Dendritic cell treated with granulocyte-macrophage colony-stimulating factor and Interleukin-4, amounts not matched to agents 40 ng/mL and 50 ng/mL, for 4 days (primary cell): ENCODE measurements at regions of chr14 and their contacts with region 1.

Region 1: GRCh38 chr14:70027785-70028428 is 148.7 kb downstream of the SMOC1 start:
- H3K4me3 Mint-ChIP-seq: no peak overlapping the region
- H3K27ac Mint-ChIP-seq: no peak overlapping the region
- H3K4me1 Mint-ChIP-seq: no peaks in the 10 kb centered on the region
- H3K27me3 Mint-ChIP-seq: peaks cover 1% of the 10 kb centered on the region

Region 2: DNA sequence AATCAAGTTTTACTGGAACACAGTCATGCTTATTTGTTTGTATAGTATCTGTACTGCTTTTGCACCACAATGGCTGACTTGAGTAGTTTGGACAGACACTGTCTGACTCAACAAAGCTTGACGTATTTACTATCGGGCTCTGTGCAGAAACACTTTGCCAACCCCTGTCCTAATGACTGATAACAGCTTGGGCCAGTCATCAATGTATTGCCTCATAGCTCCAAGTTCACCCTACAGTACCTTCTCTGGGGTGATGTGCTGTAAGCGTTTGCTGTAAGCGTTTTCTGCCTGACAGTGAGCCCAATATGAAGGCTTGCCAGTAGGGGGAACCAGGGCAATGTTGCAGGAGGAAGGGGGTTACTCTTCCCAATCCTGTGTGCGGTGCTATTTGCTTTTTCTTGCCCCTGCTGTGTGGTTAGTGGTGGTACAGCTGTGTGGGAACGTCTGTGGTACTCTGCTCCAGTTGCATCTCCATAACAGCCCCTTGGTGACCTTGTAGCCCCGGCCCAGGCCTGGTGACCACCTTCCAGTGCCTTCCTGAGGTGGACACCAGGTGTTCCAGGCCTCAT is 447.8 kb before region 1 on chr14:
- intact Hi-C with region 1: loop called (anchors 10 kb)
- H3K4me3 Mint-ChIP-seq: no peak overlapping the region
- H3K27ac Mint-ChIP-seq: no peak overlapping the region
- H3K4me1 Mint-ChIP-seq: peaks cover 12% of the 10 kb centered on the region
- H3K27me3 Mint-ChIP-seq: peaks cover 41% of the 10 kb centered on the region

Region 3: DNA sequence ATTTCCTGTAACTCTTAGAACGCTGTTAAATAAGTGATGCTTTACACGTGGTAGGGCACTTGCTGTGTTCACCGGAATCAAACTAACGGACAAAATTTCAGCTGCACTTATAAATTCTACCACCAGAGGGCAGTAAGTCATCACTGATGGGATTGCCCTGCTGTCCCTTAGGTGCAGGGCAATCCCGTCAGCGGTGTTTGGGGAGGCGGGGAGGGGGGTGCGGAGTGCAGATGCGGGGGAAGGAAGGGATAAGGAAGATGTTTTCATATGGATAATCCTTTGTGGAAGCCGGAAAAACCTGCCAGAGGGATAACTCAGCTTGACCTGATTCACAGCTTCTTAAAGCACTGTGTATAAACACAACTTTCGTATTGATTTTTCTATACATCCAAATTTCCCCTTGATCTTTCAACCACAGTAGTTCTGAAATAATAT is 209.1 kb before region 1 on chr14:
- intact Hi-C with region 1: loop called (anchors 1 kb)
- H3K4me3 Mint-ChIP-seq: no peak overlapping the region
- H3K27ac Mint-ChIP-seq: no peak overlapping the region
- H3K4me1 Mint-ChIP-seq: peaks cover 5% of the 10 kb centered on the region
- H3K27me3 Mint-ChIP-seq: peaks cover 2% of the 10 kb centered on the region

Region 4: DNA sequence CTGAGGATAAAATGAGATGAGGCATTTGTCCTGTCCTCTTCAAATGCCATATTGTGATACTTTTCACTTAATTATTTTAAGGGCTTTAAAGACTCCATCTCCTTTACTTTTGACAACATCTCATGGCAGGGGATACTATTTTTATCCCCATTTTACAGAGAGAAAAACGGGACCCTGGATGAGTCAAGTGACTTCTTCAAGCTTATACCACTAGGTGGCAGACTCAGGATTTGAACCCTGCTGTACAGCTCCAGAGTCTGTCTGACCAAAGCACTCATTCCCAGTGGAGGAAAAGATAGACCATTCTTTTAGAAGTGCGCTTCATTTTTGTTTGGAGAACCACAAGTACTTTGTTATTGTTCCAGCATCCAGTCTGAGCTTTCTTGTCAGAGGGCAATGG is 150.4 kb before region 1 on chr14:
- intact Hi-C with region 1: loop called (anchors 1 kb)
- H3K4me3 Mint-ChIP-seq: no peak overlapping the region
- H3K27ac Mint-ChIP-seq: no peak overlapping the region
- H3K4me1 Mint-ChIP-seq: no peaks in the 10 kb centered on the region
- H3K27me3 Mint-ChIP-seq: peaks cover 47% of the 10 kb centered on the region

Region 5: GRCh38 chr14:69985456-69985855 is 42.5 kb before region 1 on chr14:
- intact Hi-C with region 1: no loop called
- H3K4me3 Mint-ChIP-seq: no peak overlapping the region
- H3K27ac Mint-ChIP-seq: no peak overlapping the region
- H3K4me1 Mint-ChIP-seq: no peaks in the 10 kb centered on the region
- H3K27me3 Mint-ChIP-seq: peaks cover 20% of the 10 kb centered on the region